ENCODE measurements at regions of chr18 and their contacts with region 1.

Region 1: GRCh38 chr18:66495844-66496243 is 108.0 kb downstream of the CDH19 start:
- DNase-seq: peak; percentile 14 to 41
- ATAC-seq: peak in 5 of 8 donors; percentile 63 to 74 (median 70)
- H3K4me3 ChIP-seq: no peak overlapping the region
- H3K27ac ChIP-seq: no peak overlapping the region
- H3K4me1 ChIP-seq: no peaks in the 10 kb centered on the region
- H3K27me3 ChIP-seq: no peaks in the 10 kb centered on the region
- CTCF ChIP-seq: peak in 7 of 9 donors; percentile 26 to 66 (median 51)

Region 2: GRCh38 chr18:65725251-65726050 is 770.4 kb before region 1 on chr18:
- intact Hi-C with region 1: loop called in 5 of 10 experiments (anchors 5 to 10 kb)
- DNase-seq: peak; percentile 4 to 14
- ATAC-seq: no peak
- H3K4me3 ChIP-seq: no peak overlapping the region
- H3K27ac ChIP-seq: no peak overlapping the region
- H3K4me1 ChIP-seq: no peaks in the 10 kb centered on the region
- H3K27me3 ChIP-seq: no peaks in the 10 kb centered on the region
- CTCF ChIP-seq: peak in 8 of 9 donors; percentile 8 to 57 (median 43)

Region 3: DNA sequence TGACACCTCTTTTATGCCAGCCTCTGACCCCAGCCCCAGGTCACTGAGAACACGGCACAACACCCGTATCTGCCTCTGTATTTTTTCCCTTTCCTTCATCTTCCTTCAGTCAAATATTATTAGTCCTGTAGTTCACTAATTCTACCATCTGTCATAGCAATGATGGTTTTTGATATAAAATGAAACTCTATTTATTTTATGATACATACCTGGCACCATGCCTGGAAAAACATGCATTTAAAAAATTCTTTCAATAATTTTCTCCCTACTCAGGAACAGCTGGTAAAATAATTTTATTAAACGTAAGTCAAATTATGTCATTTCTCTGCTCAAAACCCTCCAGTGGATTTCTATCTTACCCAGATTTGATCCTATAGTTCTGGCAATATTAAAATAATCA is 520.3 kb before region 1 on chr18:
- intact Hi-C with region 1: loop called in 1 of 10 experiments (anchors 10 kb)
- DNase-seq: no peak
- ATAC-seq: no peak
- H3K4me3 ChIP-seq: no peak overlapping the region
- H3K27ac ChIP-seq: no peak overlapping the region
- H3K4me1 ChIP-seq: no peaks in the 10 kb centered on the region
- H3K27me3 ChIP-seq: no peaks in the 10 kb centered on the region
- CTCF ChIP-seq: no peak

Region 4: GRCh38 chr18:66124394-66124793 is 371.4 kb before region 1 on chr18:
- intact Hi-C with region 1: loop called in 2 of 10 experiments (anchors 10 kb)
- DNase-seq: no peak
- ATAC-seq: no peak
- H3K4me3 ChIP-seq: no peak overlapping the region
- H3K27ac ChIP-seq: no peak overlapping the region
- H3K4me1 ChIP-seq: no peaks in the 10 kb centered on the region
- H3K27me3 ChIP-seq: no peaks in the 10 kb centered on the region
- CTCF ChIP-seq: peak in 7 of 9 donors; percentile 22 to 54 (median 49)